ENCODE measurements at regions of chr17 and their contacts with region 1.

Region 1: DNA sequence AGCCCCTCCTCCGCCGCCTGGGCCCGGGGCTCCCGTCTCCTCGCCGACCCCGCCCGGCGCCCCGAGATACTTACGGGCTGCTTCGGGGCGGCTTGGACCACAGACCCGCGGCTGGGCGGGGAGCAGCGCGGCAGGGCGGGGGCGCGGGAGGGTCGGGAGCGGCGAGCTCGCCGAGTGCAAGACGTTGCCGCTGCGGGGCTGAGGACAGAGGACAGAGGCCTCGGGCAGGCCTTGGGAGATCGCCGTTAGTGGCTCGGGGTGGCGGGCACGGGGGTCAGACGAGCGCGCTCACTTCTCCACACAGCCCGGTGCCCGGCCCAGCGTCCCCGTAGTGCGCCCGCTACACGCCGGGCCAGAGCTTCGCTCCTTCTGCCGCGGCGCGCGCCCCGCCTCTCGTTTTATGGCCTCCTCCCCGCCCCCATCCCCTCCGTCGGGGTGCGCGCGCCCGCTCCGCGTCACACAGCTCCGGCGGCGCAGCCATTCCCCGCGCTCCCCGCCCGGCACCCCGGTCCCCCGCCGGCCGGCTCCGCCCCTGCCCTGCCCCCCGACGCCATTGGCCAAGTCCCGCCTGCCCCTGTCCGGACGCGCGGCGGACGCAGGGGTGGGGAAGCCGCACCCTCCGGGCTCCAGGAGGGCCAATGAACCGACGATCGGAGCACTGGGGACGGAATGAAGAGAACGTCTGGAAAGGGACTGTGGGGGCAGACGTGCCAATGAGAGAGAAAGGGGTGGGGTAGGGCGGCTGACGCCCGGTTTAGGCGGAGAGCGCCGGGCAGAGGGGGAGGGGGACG is at the start of gene TOB1:
- DNase-seq: peak; percentile 100
- H3K4me3 ChIP-seq: peak within 1 kb of the TSS; percentile 96
- H3K4me3 Mint-ChIP-seq: peak within 1 kb of the TSS; percentile 79
- H3K27ac Mint-ChIP-seq: peak within 1 kb of the TSS; percentile 95
- H3K4me1 ChIP-seq: peaks cover 15% of the 10 kb centered on the region
- H3K4me1 Mint-ChIP-seq: peaks cover 23% of the 10 kb centered on the region
- H3K27me3 ChIP-seq: no peaks in the 10 kb centered on the region
- H3K27me3 Mint-ChIP-seq: no peaks in the 10 kb centered on the region
- CTCF ChIP-seq: no peak
- total RNA-seq, gene TOB1: 114 TPM in 2 replicates

Region 2: DNA sequence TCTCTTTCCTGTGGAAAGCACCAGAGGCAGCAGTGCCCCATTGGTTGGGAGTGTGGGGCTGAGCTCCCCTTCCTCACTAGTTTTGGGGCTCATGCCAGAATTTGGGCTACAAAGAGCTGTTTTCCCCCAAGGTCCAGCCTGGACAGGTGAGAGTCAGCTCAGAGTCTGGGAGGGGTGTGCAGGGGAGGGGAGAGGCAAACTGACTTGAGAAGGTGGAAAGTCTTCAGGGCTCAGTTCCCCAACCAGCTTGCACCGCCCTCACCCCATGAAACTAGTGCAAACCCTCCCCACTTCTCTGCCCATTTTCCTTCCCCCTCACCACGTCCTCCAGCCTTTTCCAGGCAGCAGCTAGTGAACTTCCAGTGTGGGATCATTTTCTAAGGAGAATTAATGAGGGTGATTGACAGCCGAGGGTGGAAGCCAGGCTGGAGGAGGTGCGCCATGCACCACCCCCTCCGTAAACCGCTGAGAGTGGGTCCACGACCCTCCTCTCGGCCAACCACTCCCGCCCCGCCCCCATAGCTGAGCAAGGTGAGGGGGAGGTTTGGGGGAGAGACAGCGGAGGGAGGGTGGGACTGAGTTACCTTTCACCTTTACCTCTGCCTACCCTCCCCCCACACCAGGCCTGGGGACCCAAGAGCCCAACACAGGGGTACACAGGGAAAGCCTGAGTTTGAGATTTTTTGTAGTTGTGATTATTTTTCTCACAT is 903.4 kb before region 1 on chr17:
- CTCF ChIA-PET with region 1: no interaction called
- POLR2A ChIA-PET with region 1: interaction called, 12 read pairs
- intact Hi-C with region 1: no loop called
- DNase-seq: no peak
- H3K4me3 ChIP-seq: no peak overlapping the region
- H3K4me3 Mint-ChIP-seq: no peak overlapping the region
- H3K27ac Mint-ChIP-seq: no peak overlapping the region
- H3K4me1 ChIP-seq: no peaks in the 10 kb centered on the region; the same call in 1 of the 2 replicates
- H3K4me1 Mint-ChIP-seq: peaks cover 12% of the 10 kb centered on the region
- H3K27me3 ChIP-seq: no peaks in the 10 kb centered on the region
- H3K27me3 Mint-ChIP-seq: peaks cover 3% of the 10 kb centered on the region
- CTCF ChIP-seq: no peak

Region 3: DNA sequence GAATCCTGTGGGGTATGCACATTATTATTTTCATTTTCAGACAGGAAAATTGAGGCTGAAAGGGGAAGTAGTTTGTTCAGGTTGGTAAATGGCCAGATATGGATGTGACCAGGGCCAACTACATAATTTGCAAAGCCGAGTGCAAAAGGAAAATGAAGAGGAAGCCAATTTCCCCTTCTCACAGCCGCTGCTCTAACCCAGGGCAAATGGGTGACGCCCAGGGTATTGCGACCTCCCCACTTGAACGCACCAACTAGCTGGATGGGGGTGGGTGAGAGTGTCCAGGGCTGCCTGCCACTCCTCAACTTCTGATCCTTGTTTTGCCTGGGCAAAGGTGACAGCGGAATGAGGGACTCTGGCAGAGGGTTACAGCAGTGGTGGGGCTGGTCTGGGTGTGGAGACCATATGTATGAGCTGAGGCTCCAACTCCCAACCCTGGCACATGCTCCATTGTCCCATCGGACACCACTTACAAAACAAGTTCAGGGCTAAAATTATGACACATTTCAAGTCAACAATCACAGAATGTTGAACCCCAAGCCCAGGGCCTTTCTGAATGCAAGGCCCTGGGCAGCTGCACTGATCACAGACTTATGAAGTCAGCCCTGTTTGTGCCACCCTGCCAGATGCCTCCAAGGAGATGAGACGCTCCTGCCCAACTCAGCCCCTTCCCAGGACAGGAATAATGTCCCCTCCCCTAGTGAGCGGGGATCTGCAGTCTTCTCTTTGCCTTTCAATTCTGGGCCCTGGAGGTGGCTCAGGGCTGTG is 100.5 kb before region 1 on chr17:
- CTCF ChIA-PET with region 1: interaction called, 4 read pairs
- POLR2A ChIA-PET with region 1: interaction called, 19 read pairs
- intact Hi-C with region 1: no loop called
- DNase-seq: peak in 1 of 2 experiments; percentile 47
- H3K4me3 ChIP-seq: no peak overlapping the region; the same call in 1 of the 2 replicates
- H3K4me3 Mint-ChIP-seq: peak overlapping the region; percentile 25
- H3K27ac Mint-ChIP-seq: peak overlapping the region; percentile 81
- H3K4me1 ChIP-seq: peaks cover 67% of the 10 kb centered on the region
- H3K4me1 Mint-ChIP-seq: peaks cover 55% of the 10 kb centered on the region
- H3K27me3 ChIP-seq: no peaks in the 10 kb centered on the region
- H3K27me3 Mint-ChIP-seq: no peaks in the 10 kb centered on the region
- CTCF ChIP-seq: no peak

Region 4: DNA sequence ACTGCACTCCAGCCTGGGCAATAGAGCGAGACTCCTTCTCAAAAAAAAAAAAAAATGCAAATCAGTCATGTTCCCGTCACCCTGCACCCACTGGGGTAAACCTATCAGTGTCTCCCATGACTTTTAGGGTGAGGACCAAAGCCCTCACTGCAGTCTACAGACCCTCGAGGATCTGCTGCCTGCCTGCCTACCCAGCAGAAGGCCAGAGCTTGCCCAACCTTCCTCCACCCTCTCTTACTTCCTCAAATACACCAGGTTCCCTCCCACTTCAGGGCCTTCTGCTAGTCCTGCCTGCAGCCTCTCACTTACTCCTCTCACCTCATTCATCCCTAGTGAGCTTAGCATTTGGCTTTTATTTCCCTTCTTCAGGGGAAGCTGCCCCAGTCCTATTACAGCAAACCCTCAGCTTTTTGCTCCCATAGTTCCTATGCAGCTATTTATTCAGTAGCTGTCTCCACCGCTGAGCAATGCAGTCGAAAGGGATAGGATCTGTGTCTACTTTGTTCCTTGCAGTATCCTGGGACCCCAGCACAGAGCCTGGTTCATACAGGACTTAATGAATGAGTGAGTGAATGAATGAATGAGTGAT is 17.8 kb after region 1 on chr17:
- CTCF ChIA-PET with region 1: interaction called, 23 read pairs
- POLR2A ChIA-PET with region 1: interaction called, 296 read pairs
- intact Hi-C with region 1: loop called (anchors 1 kb)
- DNase-seq: peak; percentile 71 to 78
- H3K4me3 ChIP-seq: no peak overlapping the region
- H3K4me3 Mint-ChIP-seq: peak overlapping the region; percentile 44
- H3K27ac Mint-ChIP-seq: peak overlapping the region; percentile 96
- H3K4me1 ChIP-seq: peaks cover 47% of the 10 kb centered on the region
- H3K4me1 Mint-ChIP-seq: peaks cover 40% of the 10 kb centered on the region
- H3K27me3 ChIP-seq: no peaks in the 10 kb centered on the region
- H3K27me3 Mint-ChIP-seq: no peaks in the 10 kb centered on the region
- CTCF ChIP-seq: no peak

Region 5: GRCh38 chr17:50909765-50910605 is 43.8 kb after region 1 on chr17:
- CTCF ChIA-PET with region 1: interaction called, 21 read pairs
- POLR2A ChIA-PET with region 1: interaction called, 131 read pairs
- intact Hi-C with region 1: loop called (anchors 1 kb)
- DNase-seq: no peak
- H3K4me3 ChIP-seq: no peak overlapping the region
- H3K4me3 Mint-ChIP-seq: no peak overlapping the region
- H3K27ac Mint-ChIP-seq: no peak overlapping the region
- H3K4me1 ChIP-seq: peaks cover 47% of the 10 kb centered on the region
- H3K4me1 Mint-ChIP-seq: peaks cover 54% of the 10 kb centered on the region
- H3K27me3 ChIP-seq: no peaks in the 10 kb centered on the region
- H3K27me3 Mint-ChIP-seq: no peaks in the 10 kb centered on the region
- CTCF ChIP-seq: no peak

Region 6: GRCh38 chr17:50949989-50950881 is 84.1 kb after region 1 on chr17:
- CTCF ChIA-PET with region 1: interaction called, 31 read pairs
- POLR2A ChIA-PET with region 1: interaction called, 78 read pairs
- intact Hi-C with region 1: loop called (anchors 1 kb)
- DNase-seq: peak; percentile 90 to 93
- H3K4me3 ChIP-seq: no peak overlapping the region
- H3K4me3 Mint-ChIP-seq: peak overlapping the region; percentile 32
- H3K27ac Mint-ChIP-seq: peak overlapping the region; percentile 16
- H3K4me1 ChIP-seq: peaks cover 29% of the 10 kb centered on the region
- H3K4me1 Mint-ChIP-seq: peaks cover 31% of the 10 kb centered on the region
- H3K27me3 ChIP-seq: no peaks in the 10 kb centered on the region
- H3K27me3 Mint-ChIP-seq: no peaks in the 10 kb centered on the region
- CTCF ChIP-seq: peak; percentile 99

Region 7: GRCh38 chr17:51144266-51145022 is 278.3 kb after region 1 on chr17:
- CTCF ChIA-PET with region 1: no interaction called
- POLR2A ChIA-PET with region 1: no interaction called
- intact Hi-C with region 1: no loop called
- DNase-seq: no peak
- H3K4me3 ChIP-seq: no peak overlapping the region
- H3K4me3 Mint-ChIP-seq: no peak overlapping the region
- H3K27ac Mint-ChIP-seq: peak overlapping the region; percentile 24
- H3K4me1 ChIP-seq: peaks cover 13% of the 10 kb centered on the region; the same call in 1 of the 2 replicates
- H3K4me1 Mint-ChIP-seq: peaks cover 36% of the 10 kb centered on the region
- H3K27me3 ChIP-seq: no peaks in the 10 kb centered on the region
- H3K27me3 Mint-ChIP-seq: no peaks in the 10 kb centered on the region
- CTCF ChIP-seq: no peak

Region 8: DNA sequence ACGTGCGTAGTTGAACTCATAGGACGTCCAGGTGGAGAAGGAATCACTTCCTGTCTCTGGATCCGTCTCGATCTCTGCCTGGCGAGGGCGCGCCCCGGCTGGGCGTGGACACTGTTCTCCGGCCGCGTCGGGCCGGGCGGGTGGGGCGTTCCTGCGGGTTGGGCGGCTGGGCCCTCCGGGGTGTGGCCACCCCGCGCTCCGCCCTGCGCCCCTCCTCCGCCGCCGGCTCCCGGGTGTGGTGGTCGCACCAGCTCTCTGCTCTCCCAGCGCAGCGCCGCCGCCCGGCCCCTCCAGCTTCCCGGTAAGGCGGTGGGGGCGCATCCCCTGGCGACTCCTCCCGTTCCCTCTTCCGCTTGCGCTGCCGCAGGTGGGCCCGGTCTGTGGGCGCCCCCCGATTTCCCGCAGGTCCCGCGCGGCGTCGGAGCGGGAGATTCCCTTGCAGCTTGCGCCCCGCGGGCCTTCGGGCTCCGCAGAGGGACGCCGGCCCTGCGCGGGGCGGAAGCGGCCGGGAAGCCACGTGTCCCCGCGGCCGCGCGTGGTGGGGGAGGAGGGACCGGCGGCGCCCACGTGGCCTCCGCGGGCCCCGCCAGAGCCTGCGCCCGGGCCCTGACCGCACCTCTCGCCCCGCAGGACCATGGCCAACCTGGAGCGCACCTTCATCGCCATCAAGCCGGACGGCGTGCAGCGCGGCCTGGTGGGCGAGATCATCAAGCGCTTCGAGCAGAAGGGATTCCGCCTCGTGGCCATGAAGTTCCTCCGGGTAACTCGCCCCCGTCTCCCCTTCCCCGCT is 300.2 kb after region 1 on chr17 and contains the start of gene NME2:
- CTCF ChIA-PET with region 1: no interaction called
- POLR2A ChIA-PET with region 1: no interaction called
- intact Hi-C with region 1: loop called (anchors 5 kb)
- DNase-seq: peak; percentile 94 to 96
- H3K4me3 ChIP-seq: peak within 1 kb of the TSS; percentile 91
- H3K4me3 Mint-ChIP-seq: peak within 1 kb of the TSS; percentile 98
- H3K27ac Mint-ChIP-seq: peak within 1 kb of the TSS; percentile 97
- H3K4me1 ChIP-seq: peaks cover 21% of the 10 kb centered on the region
- H3K4me1 Mint-ChIP-seq: peaks cover 10% of the 10 kb centered on the region
- H3K27me3 ChIP-seq: no peaks in the 10 kb centered on the region
- H3K27me3 Mint-ChIP-seq: no peaks in the 10 kb centered on the region
- CTCF ChIP-seq: peak in 1 of 2 experiments; percentile 2
- total RNA-seq, gene NME2: 734 and 821 TPM in 2 replicates